ENCODE measurements at regions of chr19 and their contacts with region 1.

Region 1: DNA sequence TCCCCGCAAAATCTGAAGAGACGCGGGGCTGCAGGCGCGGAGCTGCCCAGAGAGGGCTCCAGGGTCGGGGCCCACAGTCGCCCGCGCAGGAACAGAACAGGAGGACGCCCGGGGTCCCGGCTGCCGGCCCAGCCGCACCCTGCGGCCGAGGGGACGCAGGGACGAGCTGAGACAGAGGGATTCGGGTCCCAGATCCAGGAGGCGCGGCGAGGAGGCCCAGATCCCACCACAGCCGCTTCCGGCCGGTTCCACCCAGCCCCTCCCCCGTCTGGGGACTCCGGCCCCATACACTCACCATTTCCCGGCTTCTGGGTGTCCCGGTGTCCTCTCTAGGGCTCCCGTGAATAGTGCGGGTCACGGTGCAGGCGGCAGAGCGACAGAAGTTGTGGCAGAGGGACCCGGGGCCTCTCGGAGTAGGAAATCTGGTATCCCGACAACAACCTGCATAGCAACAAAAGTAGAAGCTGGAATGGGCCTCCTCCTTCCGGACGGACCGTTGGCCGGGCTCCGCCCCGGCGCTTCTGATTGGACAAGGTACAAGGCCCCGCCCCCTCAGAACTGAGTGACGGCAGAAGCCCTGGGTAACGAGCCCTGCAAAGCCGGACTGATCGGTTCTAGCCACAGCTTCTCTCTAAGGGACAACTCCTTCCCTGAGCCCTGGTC is at the start of gene ZNF20:
- DNase-seq: peak; percentile 96 to 98 (median 97)
- ATAC-seq: peak; percentile 99 to 100 (median 100)
- H3K4me3 ChIP-seq: peak within 1 kb of the TSS; percentile 60 to 98 (median 86)
- H3K27ac ChIP-seq: peak within 1 kb of the TSS; percentile 12 to 91 (median 81)
- H3K4me1 ChIP-seq: peaks cover 3 to 25% (median 19%) of the 10 kb centered on the region in 12 donors
- H3K27me3 ChIP-seq: no peaks in the 10 kb centered on the region
- CTCF ChIP-seq: peak in 1 of 12 donors; percentile 17
- POLR2A ChIP-seq: peak in 1 of 2 donors; percentile 43
- total RNA-seq, gene ZNF20: 0.63 to 2.7 (median 1.4) TPM in 6 of 9 donors, not detected in the others

Region 2: DNA sequence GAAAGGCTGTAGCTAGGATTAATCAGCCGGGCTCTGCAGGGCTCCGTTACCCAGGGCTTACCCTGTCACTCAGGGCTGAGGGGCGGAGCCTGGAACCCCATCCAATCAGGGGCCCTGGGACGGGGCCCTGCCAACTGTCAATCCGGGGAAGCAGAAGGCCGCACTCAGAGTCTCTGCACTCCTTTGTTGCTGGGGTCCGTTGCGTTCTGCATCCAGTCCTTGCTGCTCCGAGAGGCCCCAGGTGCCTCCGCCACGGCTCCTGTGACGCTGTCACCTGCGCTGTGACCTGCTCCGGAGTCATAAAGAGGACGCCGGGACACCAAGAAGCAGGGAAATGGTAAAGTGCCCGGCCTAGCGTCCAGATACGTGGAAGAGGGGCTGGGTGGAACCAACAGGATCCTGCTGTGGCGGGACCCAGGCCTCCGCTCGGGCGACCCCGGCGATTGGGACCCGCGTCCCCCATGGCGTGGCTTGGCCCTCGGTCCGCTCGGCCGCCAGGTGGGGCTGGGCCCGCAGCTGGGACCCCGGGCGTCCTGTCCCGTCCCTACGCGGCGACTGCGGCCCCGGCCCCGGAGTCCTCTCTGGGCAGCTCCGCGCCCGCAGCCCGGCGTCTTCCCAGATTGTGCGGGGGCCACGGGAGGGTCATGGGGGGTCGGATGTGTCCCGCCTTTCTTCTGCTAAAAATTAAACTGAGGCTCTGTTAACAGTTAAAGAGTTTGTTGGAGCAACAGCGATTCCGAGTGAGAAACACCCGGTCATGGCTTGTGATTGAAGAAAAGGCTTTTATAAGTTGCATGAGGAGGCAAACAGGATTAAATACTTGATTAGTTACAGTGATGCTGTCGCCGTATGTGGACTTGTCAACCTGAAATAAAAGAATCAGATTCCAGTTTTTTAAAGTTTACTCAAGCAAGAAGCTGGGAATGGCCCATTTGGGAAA is 341.4 kb before region 1 on chr19 and contains the start of gene ZNF491:
- intact Hi-C with region 1: loop called in 8 of 10 experiments (anchors 2 to 10 kb)
- DNase-seq: peak; percentile 93 to 96 (median 95)
- ATAC-seq: peak; percentile 99 to 100 (median 99)
- H3K4me3 ChIP-seq: peak within 1 kb of the TSS; percentile 51 to 93 (median 78)
- H3K27ac ChIP-seq: peak within 1 kb of the TSS; percentile 66 to 92 (median 82)
- H3K4me1 ChIP-seq: peaks cover 0 to 22% (median 12%) of the 10 kb centered on the region in 12 donors
- H3K27me3 ChIP-seq: no peaks in the 10 kb centered on the region
- CTCF ChIP-seq: peak in 8 of 12 donors; percentile 14 to 55 (median 39)
- POLR2A ChIP-seq: peak in 1 of 2 donors; percentile 91
- total RNA-seq, gene ZNF491: 0.91 to 3.4 (median 2.5) TPM

Region 3: DNA sequence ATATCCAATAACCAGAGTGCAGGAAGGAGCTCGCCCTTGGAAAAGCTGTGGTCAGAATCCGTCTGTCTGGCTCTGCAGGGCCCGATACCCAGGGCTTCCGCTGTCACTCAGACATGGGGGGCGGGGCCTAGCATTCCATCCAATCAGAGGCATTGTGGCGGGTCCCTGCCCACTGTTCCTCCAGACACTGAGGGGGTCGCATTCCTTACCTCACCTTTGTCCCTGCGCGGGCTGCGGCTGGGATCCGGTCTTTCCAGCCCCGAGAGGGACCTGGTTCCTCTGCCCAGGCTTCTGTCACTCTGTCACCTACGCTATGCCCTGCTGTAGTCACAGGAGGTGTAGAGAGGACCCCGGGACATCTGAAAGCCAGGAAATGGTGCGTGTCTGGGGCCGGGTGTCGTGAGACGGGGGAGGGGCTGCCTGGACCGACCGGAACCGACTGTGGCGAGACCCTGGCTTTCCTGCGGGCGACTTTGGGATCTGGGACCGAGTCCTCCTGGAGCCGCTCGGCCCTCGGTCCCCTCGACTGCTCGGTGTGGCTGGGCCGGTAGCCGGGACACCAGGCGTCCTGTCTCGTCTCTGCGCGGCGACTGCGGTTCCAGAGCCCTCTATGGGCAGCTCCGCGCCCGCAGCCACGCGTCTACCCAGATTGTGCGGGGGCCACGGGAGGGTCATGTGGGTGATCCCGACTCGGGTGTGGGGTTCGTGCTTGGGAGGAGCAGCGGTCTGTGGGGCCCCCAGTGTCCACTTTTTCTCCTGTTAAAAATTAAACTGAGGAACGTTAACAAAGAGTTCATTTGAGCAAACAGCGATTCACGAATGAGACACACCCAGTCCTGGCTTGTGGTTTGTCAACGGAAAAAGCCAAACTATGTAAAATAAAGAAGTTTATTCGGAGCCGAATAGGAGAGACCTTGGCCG is 252.1 kb before region 1 on chr19 and contains the start of gene ZNF69:
- intact Hi-C with region 1: loop called in 7 of 10 experiments (anchors 2 to 10 kb)
- DNase-seq: peak; percentile 88 to 94 (median 89)
- ATAC-seq: peak; percentile 95 to 100 (median 99)
- H3K4me3 ChIP-seq: peak within 1 kb of the TSS; percentile 66 to 85 (median 70)
- H3K27ac ChIP-seq: peak within 1 kb of the TSS; percentile 10 to 90 (median 84)
- H3K4me1 ChIP-seq: peaks cover 0 to 15% (median 9%) of the 10 kb centered on the region in 12 donors
- H3K27me3 ChIP-seq: no peaks in the 10 kb centered on the region
- CTCF ChIP-seq: peak in 4 of 12 donors; percentile 23 to 51 (median 33)
- POLR2A ChIP-seq: peak in 1 of 2 donors; percentile 44
- total RNA-seq, gene ZNF69: 2.8 to 5.4 (median 4.2) TPM

Region 4: GRCh38 chr19:11964858-11965645 is 175.0 kb before region 1 on chr19 and contains the start of gene ZNF763:
- intact Hi-C with region 1: loop called in 8 of 10 experiments (anchors 1 to 5 kb)
- DNase-seq: peak; percentile 94 to 97 (median 95)
- ATAC-seq: peak; percentile 99
- H3K4me3 ChIP-seq: peak within 1 kb of the TSS; percentile 59 to 94 (median 78)
- H3K27ac ChIP-seq: peak within 1 kb of the TSS; percentile 73 to 99 (median 92)
- H3K4me1 ChIP-seq: peaks cover 0 to 22% (median 13%) of the 10 kb centered on the region in 12 donors
- H3K27me3 ChIP-seq: no peaks in the 10 kb centered on the region
- CTCF ChIP-seq: peak in 1 of 12 donors; percentile 0
- POLR2A ChIP-seq: peak in 1 of 2 donors; percentile 83
- total RNA-seq, gene ZNF763: 1.3 to 6.2 (median 5.0) TPM

Region 5: DNA sequence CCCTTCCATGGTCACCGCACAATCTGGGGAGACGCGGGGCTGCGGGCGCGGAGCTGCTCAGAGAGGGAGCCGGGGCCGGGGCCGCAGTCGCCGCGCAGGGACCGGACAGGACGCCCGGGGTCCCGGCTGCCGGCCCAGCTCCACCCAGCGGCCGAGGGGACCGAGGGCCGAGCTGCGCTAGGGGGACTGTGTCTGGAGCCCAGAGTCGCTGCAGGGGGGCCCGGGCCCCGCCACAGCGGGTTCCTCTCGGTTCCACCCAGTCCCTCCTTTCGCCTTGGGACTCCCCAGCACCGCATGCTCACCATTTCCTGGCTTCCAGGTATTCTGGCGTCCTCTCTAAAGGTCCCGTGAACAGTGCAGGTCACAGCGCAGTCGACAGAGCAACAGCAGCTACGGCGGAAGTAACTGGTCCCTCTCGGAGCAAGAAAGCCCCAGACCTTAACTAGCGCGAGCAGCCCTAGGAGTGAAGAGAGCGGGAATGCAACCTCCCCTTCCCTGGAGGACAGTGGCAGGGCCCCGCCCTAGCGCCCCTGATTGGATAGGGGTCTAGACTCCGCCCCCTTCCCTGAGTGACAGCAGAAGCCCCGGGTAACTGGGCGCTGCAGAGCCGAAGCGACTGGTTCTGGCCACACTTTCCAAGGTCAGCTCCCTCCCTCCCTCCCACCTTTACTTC is 87.4 kb before region 1 on chr19 and contains the start of gene ZNF878:
- intact Hi-C with region 1: loop called in 1 of 10 experiments (anchors 5 kb)
- DNase-seq: peak; percentile 90 to 95 (median 92)
- ATAC-seq: peak; percentile 100
- H3K4me3 ChIP-seq: peak within 1 kb of the TSS; percentile 59 to 85 (median 68)
- H3K27ac ChIP-seq: peak within 1 kb of the TSS in 11 of 12 donors; percentile 20 to 79 (median 66)
- H3K4me1 ChIP-seq: peaks cover 0 to 18% (median 2%) of the 10 kb centered on the region in 12 donors
- H3K27me3 ChIP-seq: no peaks in the 10 kb centered on the region
- CTCF ChIP-seq: peak in 5 of 12 donors; percentile 7 to 32 (median 26)
- POLR2A ChIP-seq: peak; percentile 71 to 94
- total RNA-seq, gene ZNF878: 0.16 to 0.24 (median 0.22) TPM in 4 of 9 donors, not detected in the others

Region 6: GRCh38 chr19:12085074-12085805 is 54.8 kb before region 1 on chr19:
- intact Hi-C with region 1: loop called in 7 of 10 experiments (anchors 2 to 10 kb)
- DNase-seq: no peak
- ATAC-seq: no peak
- H3K4me3 ChIP-seq: no peak overlapping the region
- H3K27ac ChIP-seq: no peak overlapping the region
- H3K4me1 ChIP-seq: no peaks in the 10 kb centered on the region
- H3K27me3 ChIP-seq: no peaks in the 10 kb centered on the region
- CTCF ChIP-seq: no peak
- POLR2A ChIP-seq: no peak

Region 7: GRCh38 chr19:12162882-12163806 is 23.1 kb after region 1 on chr19 and contains the start of gene ZNF136:
- intact Hi-C with region 1: no loop called
- DNase-seq: peak; percentile 96 to 97 (median 97)
- ATAC-seq: peak; percentile 98 to 99 (median 99)
- H3K4me3 ChIP-seq: peak within 1 kb of the TSS; percentile 70 to 99 (median 84)
- H3K27ac ChIP-seq: peak within 1 kb of the TSS; percentile 82 to 98 (median 94)
- H3K4me1 ChIP-seq: peaks cover 0 to 42% (median 33%) of the 10 kb centered on the region in 12 donors
- H3K27me3 ChIP-seq: no peaks in the 10 kb centered on the region
- CTCF ChIP-seq: peak in 1 of 12 donors; percentile 4
- POLR2A ChIP-seq: peak in 1 of 2 donors; percentile 79
- total RNA-seq, gene ZNF136: 2.7 to 7.5 (median 4.8) TPM

Measured in heart left ventricle (tissue), 16 donors.